ENCODE measurements at regions of chr4 and their contacts with region 1.

Region 1: GRCh38 chr4:15882675-15883086 is 55.9 kb downstream of the FGFBP1 start:
- DNase-seq: peak in 4 of 5 donors; percentile 59 to 91 (median 75)
- H3K4me3 ChIP-seq: no peak overlapping the region
- H3K27ac ChIP-seq: no peak overlapping the region
- H3K4me1 ChIP-seq: no peaks in the 10 kb centered on the region
- H3K27me3 ChIP-seq: no peaks in the 10 kb centered on the region
- CTCF ChIP-seq: peak; percentile 93

Region 2: DNA sequence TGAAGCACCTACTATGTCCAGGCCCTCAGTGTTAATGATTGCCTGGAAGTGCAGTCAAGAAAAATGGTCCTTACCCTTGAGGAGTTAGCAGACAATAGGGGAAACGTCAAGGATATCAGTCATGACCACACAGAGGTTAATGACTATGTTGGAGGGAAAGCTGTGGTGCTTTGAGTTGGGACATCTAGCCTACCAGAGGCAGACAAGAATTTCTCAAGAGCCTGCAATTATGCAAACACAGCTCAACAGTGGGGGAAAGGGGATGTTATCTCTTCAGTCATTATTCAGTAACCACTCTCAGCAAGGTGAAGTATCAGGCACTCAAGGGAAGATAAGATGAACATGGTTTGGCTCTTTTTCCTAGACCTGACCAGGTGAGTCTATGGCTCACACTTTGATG is 62.8 kb after region 1 on chr4:
- intact Hi-C with region 1: loop called (anchors 5 kb)
- DNase-seq: no peak
- H3K4me3 ChIP-seq: no peak overlapping the region
- H3K27ac ChIP-seq: no peak overlapping the region
- H3K4me1 ChIP-seq: no peaks in the 10 kb centered on the region
- H3K27me3 ChIP-seq: no peaks in the 10 kb centered on the region
- CTCF ChIP-seq: no peak

Region 3: DNA sequence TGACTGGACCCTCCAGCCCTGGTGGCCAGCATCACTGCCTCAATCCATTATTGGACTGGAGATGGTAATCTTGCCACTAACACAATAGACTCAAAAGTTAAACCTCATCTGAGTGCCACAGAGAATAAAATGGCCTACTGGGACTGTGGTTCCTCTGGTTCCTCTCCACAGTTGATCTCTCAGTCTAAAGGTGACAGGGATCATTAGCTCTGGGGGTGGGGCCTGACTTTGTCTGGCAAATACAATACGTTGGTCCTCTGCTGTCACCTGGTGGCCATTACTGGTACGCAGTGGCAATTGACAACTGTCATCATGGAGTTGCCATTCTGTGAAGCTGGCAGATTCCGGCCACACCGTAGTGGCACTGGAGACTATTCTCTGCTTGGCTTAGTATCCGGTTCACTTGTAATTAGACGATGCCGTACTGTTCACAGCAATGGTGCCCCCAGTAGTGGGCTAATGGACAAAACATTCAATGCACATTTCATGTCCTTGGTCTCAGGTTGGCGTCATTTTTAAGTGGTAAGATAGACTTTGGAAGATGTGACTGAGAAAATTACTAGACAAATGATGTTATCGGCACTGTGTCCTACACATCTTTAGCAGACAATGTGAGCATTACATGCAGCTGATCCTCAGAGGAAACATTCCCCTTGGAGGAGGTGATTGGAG is 73.6 kb after region 1 on chr4:
- intact Hi-C with region 1: loop called (anchors 5 kb)
- DNase-seq: peak; percentile 49 to 77 (median 70)
- H3K4me3 ChIP-seq: no peak overlapping the region
- H3K27ac ChIP-seq: no peak overlapping the region
- H3K4me1 ChIP-seq: no peaks in the 10 kb centered on the region
- H3K27me3 ChIP-seq: no peaks in the 10 kb centered on the region
- CTCF ChIP-seq: peak; percentile 95